Activated naive CD4-positive, alpha-beta T cell treated with anti-CD3 and anti-CD28 coated beads for 36 hours (primary cell): ENCODE measurements at regions of chr6 and their contacts with region 1.

Region 1: GRCh38 chr6:149293244-149293643 is 24.3 kb upstream of the TAB2 start:
- DNase-seq: no peak
- H3K4me3 Mint-ChIP-seq: no peak overlapping the region
- H3K27ac Mint-ChIP-seq: no peak overlapping the region
- H3K4me1 Mint-ChIP-seq: peaks cover 3% of the 10 kb centered on the region
- H3K27me3 Mint-ChIP-seq: no peaks in the 10 kb centered on the region

Region 2: DNA sequence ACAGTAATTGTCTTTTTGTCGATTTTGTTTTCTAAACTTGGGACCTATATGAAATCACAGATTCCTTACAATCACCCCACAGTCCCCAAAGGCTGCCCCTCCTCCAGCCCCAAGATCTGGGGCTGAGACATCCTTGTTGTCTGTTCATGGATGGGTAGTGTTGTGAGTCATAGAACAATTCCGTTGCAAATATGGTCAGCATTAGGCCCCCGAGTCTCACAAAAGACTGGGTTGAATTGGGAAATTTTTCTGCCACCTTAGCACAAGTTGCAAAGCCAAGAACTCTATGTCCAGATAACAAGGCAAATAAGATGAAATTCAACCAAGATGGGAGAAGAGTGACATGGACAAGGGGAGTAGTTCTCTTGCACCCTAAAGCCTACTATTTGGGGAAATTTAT is 13.7 kb after region 1 on chr6:
- CTCF ChIA-PET with region 1: no interaction called
- intact Hi-C with region 1: loop called (anchors 2 kb)
- DNase-seq: no peak
- H3K4me3 Mint-ChIP-seq: no peak overlapping the region
- H3K27ac Mint-ChIP-seq: no peak overlapping the region
- H3K4me1 Mint-ChIP-seq: peaks cover 4% of the 10 kb centered on the region
- H3K27me3 Mint-ChIP-seq: no peaks in the 10 kb centered on the region